Mammary epithelial cell (primary cell): ENCODE measurements at regions of chr20 and their contacts with region 1.

Region 1: GRCh38 chr20:63309261-63310071 is 16.5 kb downstream of the COL20A1 start:
- DNase-seq: no peak
- H3K4me3 ChIP-seq: no peak overlapping the region
- H3K27ac ChIP-seq: no peak overlapping the region
- H3K4me1 ChIP-seq: no peaks in the 10 kb centered on the region
- H3K27me3 ChIP-seq: peaks cover 3% of the 10 kb centered on the region
- CTCF ChIP-seq: peak; percentile 55 to 82

Region 2: GRCh38 chr20:63381807-63382322 is 72.4 kb after region 1 on chr20:
- CTCF ChIA-PET with region 1: interaction called, 5 read pairs
- dilution Hi-C with region 1: no loop called
- in situ Hi-C with region 1: no loop called
- intact Hi-C with region 1: loop called (anchors 1 kb)
- DNase-seq: no peak
- H3K4me3 ChIP-seq: no peak overlapping the region
- H3K27ac ChIP-seq: no peak overlapping the region
- H3K4me1 ChIP-seq: no peaks in the 10 kb centered on the region
- H3K27me3 ChIP-seq: peaks cover 5% of the 10 kb centered on the region
- CTCF ChIP-seq: peak; percentile 85 to 91